CD4-positive, alpha-beta memory T cell (primary cell): ENCODE measurements at regions of chr14 and their contacts with region 1.

Region 1: GRCh38 chr14:94748667-94749347 is 21.1 kb downstream of the GSC start:
- DNase-seq: no peak
- H3K4me3 ChIP-seq: no peak overlapping the region
- H3K4me3 Mint-ChIP-seq: no peak overlapping the region
- H3K27ac ChIP-seq: no peak overlapping the region
- H3K27ac Mint-ChIP-seq: no peak overlapping the region
- H3K4me1 ChIP-seq: no peaks in the 10 kb centered on the region
- H3K4me1 Mint-ChIP-seq: peaks cover 0 to 1% (median 0%) of the 10 kb centered on the region in 4 donors
- H3K27me3 ChIP-seq: no peaks in the 10 kb centered on the region
- H3K27me3 Mint-ChIP-seq: peaks cover 3 to 9% of the 10 kb centered on the region in 2 donors

Region 2: DNA sequence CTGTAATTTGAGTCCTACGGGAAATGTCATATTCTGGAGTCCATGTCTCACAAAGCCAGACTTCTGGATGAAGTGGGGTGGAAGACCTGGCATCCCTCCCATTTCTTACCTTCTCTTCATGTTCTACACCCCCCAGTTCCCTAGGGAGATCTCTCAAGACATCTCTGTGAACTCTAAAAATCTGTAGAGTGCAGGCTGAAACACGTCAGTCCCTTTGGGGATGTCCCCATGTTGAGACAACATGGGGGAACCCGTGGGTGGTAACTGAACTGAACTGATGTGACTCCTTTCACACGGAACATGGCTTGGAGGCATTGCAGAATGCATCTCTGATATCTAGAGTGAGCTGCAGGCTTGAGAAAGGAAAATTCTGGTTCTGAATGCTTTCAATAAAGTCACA is 254.7 kb before region 1 on chr14:
- CTCF ChIA-PET with region 1: no interaction called
- POLR2A ChIA-PET with region 1: no interaction called
- intact Hi-C with region 1: loop called (anchors 5 kb)
- DNase-seq: no peak
- H3K4me3 ChIP-seq: no peak overlapping the region
- H3K4me3 Mint-ChIP-seq: no peak overlapping the region
- H3K27ac ChIP-seq: no peak overlapping the region
- H3K27ac Mint-ChIP-seq: no peak overlapping the region
- H3K4me1 ChIP-seq: no peaks in the 10 kb centered on the region
- H3K4me1 Mint-ChIP-seq: no peaks in the 10 kb centered on the region
- H3K27me3 ChIP-seq: no peaks in the 10 kb centered on the region
- H3K27me3 Mint-ChIP-seq: peaks cover 5 to 7% of the 10 kb centered on the region in 2 donors

Region 3: DNA sequence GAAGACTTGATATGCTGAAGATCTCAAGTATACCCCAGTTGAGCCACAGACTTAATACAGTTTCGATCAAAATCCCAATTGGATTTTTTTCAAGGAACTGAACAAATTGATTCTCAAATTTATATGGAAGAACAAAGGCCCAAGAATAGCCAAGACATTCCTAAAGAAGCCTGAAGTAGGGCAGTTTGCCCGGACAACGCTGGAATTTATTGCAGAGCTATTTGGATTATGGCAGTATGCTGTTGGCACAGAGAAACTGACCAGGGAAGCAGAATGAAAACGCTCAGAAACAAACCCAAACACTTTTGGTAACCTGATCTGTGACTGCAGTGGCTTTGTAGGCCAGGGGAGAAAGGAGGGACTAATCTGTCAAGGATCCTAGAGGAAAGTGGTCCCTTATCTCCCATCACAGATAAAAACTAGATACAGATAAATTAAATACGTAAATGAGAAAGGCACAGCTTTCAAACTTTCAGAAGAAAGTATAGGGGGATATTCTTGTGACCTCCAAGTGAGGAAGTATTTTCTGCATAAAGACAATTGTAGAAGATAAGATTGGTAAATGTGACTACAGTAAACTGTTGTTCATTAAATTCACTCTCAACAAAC is 57.0 kb after region 1 on chr14:
- CTCF ChIA-PET with region 1: no interaction called
- POLR2A ChIA-PET with region 1: no interaction called
- intact Hi-C with region 1: no loop called
- DNase-seq: no peak
- H3K4me3 ChIP-seq: no peak overlapping the region
- H3K4me3 Mint-ChIP-seq: no peak overlapping the region
- H3K27ac ChIP-seq: no peak overlapping the region
- H3K27ac Mint-ChIP-seq: no peak overlapping the region
- H3K4me1 ChIP-seq: no peaks in the 10 kb centered on the region
- H3K4me1 Mint-ChIP-seq: no peaks in the 10 kb centered on the region
- H3K27me3 ChIP-seq: no peaks in the 10 kb centered on the region
- H3K27me3 Mint-ChIP-seq: peaks cover 4 to 5% of the 10 kb centered on the region in 2 donors